ENCODE measurements at regions of chr3 and their contacts with region 1.

Region 1: GRCh38 chr3:48151058-48151806 is 37.0 kb downstream of the CDC25A start:
- DNase-seq: peak; percentile 49
- H3K4me3 Mint-ChIP-seq: no peak overlapping the region
- H3K27ac Mint-ChIP-seq: no peak overlapping the region
- H3K4me1 Mint-ChIP-seq: peaks cover 10% of the 10 kb centered on the region
- H3K27me3 Mint-ChIP-seq: no peaks in the 10 kb centered on the region

Region 2: GRCh38 chr3:47836986-47837385 is 314.2 kb before region 1 on chr3:
- intact Hi-C with region 1: loop called (anchors 1 kb)
- DNase-seq: no peak
- H3K4me3 Mint-ChIP-seq: no peak overlapping the region
- H3K27ac Mint-ChIP-seq: no peak overlapping the region
- H3K4me1 Mint-ChIP-seq: peaks cover 5% of the 10 kb centered on the region
- H3K27me3 Mint-ChIP-seq: no peaks in the 10 kb centered on the region

Region 3: GRCh38 chr3:47989981-47990440 is 161.2 kb before region 1 on chr3:
- intact Hi-C with region 1: loop called (anchors 1 kb)
- DNase-seq: peak; percentile 54
- H3K4me3 Mint-ChIP-seq: no peak overlapping the region
- H3K27ac Mint-ChIP-seq: no peak overlapping the region
- H3K4me1 Mint-ChIP-seq: peaks cover 11% of the 10 kb centered on the region
- H3K27me3 Mint-ChIP-seq: no peaks in the 10 kb centered on the region

Region 4: GRCh38 chr3:48088749-48089466 is 62.3 kb before region 1 on chr3:
- intact Hi-C with region 1: loop called (anchors 1 kb)
- DNase-seq: peak; percentile 94
- H3K4me3 Mint-ChIP-seq: peak overlapping the region; percentile 97
- H3K27ac Mint-ChIP-seq: peak overlapping the region; percentile 99
- H3K4me1 Mint-ChIP-seq: peaks cover 35% of the 10 kb centered on the region
- H3K27me3 Mint-ChIP-seq: peaks cover 7% of the 10 kb centered on the region

Region 5: DNA sequence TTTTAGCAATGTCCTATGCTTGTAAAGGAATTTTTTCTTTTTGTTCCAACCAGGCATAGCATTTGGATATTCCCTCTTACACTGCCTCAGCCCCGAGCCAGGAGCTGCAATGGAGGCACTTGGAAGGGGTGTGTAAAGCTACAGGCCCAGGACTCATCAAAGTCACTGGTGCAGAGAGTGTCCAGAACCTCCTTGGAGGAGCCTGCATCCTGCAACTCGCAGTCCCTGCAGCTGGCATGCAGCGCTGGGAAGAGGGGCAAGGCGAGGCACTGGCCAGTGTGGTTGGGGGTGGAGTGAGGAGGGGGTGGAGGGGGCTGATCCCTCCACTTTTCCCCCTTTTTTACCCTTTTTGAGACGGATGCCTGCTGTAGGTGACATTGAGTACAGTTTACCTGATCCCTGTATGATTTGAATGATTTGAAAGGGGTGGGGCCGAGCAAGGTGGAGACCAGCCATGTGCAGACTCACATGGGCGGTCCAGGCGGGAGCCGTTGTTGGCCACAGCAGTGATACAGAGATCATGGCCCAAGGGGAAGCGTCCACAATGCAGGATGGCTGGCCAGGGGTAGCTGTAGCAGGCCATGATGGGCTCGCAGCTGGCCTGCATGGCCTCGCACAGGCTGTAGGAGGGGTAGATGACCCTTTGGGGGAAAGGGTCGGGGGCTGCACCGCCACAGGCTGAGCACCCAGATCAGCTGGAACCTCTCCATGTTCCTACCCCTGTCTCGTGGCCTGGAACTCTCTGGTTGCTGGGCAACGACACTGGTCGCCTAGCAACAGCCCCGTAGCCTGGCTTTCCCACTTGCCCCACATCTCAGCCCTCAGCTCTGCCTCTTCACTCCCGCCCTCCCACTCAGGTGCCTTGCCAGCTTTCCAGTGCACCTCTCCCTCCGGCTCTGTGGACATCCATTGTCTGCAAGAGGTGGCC is 846.7 kb after region 1 on chr3:
- intact Hi-C with region 1: no loop called
- DNase-seq: no peak
- H3K4me3 Mint-ChIP-seq: no peak overlapping the region
- H3K27ac Mint-ChIP-seq: no peak overlapping the region
- H3K4me1 Mint-ChIP-seq: peaks cover 12% of the 10 kb centered on the region
- H3K27me3 Mint-ChIP-seq: no peaks in the 10 kb centered on the region

Measured in activated T-helper 1 cell treated with anti-CD3 and anti-CD28 coated beads, Interleukin-12 subunit alpha, Interleukin-12 subunit beta, Interleukin-2, Interleukin-4 antibody, amounts not matched to agents 30 ng/mL and 10 ng/mL and 1 ng/mL, durations not matched to agents 14 hours and 24 hours and 36 hours (primary cell).